Activated T-helper 1 cell treated with anti-CD3 and anti-CD28 coated beads, Interleukin-12 subunit alpha, Interleukin-12 subunit beta, Interleukin-2, Interleukin-4 antibody, amounts not matched to agents 30 ng/mL and 10 ng/mL and 1 ng/mL, durations not matched to agents 14 hours and 24 hours and 36 hours (primary cell): ENCODE measurements at regions of chr2 and their contacts with region 1.

Region 1: GRCh38 chr2:121722479-121722878 is 14.2 kb downstream of the NIFK start:
- DNase-seq: no peak
- H3K4me3 Mint-ChIP-seq: no peak overlapping the region
- H3K27ac Mint-ChIP-seq: peak overlapping the region; percentile 84
- H3K4me1 Mint-ChIP-seq: peaks cover 15% of the 10 kb centered on the region
- H3K27me3 Mint-ChIP-seq: no peaks in the 10 kb centered on the region

Region 2: DNA sequence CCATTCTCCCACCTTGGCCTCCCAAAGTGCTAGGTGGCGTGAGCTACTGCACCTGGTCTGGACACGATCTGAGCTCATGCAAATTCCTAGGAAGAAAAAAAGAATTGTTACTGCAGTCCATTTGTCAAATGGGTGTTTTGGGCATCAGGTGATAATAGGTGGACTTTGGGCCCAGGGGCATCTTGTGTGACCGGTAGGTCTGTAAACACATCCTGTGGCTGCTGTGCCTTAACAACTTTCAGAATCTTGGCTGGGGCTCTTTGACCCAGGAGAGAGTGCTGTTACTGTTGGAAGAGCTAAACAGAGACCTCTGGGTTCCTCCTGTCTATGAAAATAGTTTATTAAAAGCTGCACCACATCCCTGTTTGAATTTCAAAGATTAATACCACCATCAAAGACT is 402.5 kb before region 1 on chr2:
- intact Hi-C with region 1: no loop called
- DNase-seq: no peak
- H3K4me3 Mint-ChIP-seq: no peak overlapping the region
- H3K27ac Mint-ChIP-seq: no peak overlapping the region
- H3K4me1 Mint-ChIP-seq: no peaks in the 10 kb centered on the region
- H3K27me3 Mint-ChIP-seq: peaks cover 1% of the 10 kb centered on the region

Region 3: DNA sequence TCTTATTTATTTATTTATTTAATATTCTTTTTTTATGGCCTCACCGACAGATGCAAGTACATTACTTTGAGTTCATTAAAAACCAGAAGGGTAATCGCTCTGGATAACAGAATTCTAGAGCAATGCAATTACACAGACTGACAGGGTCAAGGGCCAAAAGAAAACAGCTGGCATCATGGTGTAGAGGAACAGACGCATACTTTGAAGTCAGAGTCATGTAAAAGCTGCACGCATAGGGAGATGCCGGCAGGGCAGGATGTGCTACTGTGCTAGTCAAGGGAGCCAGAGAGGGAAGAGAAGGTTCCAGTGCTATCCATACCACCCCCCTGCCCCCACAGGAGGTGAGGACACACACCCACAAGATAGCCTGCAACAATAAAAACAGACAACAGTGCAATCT is 322.3 kb before region 1 on chr2:
- intact Hi-C with region 1: loop called (anchors 1 kb)
- DNase-seq: no peak
- H3K4me3 Mint-ChIP-seq: no peak overlapping the region
- H3K27ac Mint-ChIP-seq: no peak overlapping the region
- H3K4me1 Mint-ChIP-seq: peaks cover 4% of the 10 kb centered on the region
- H3K27me3 Mint-ChIP-seq: no peaks in the 10 kb centered on the region

Region 4: GRCh38 chr2:121596221-121597080 is 126.0 kb before region 1 on chr2:
- intact Hi-C with region 1: loop called (anchors 1 kb)
- DNase-seq: no peak
- H3K4me3 Mint-ChIP-seq: peak overlapping the region; percentile 60
- H3K27ac Mint-ChIP-seq: peak overlapping the region; percentile 61
- H3K4me1 Mint-ChIP-seq: peaks cover 58% of the 10 kb centered on the region
- H3K27me3 Mint-ChIP-seq: no peaks in the 10 kb centered on the region

Region 5: DNA sequence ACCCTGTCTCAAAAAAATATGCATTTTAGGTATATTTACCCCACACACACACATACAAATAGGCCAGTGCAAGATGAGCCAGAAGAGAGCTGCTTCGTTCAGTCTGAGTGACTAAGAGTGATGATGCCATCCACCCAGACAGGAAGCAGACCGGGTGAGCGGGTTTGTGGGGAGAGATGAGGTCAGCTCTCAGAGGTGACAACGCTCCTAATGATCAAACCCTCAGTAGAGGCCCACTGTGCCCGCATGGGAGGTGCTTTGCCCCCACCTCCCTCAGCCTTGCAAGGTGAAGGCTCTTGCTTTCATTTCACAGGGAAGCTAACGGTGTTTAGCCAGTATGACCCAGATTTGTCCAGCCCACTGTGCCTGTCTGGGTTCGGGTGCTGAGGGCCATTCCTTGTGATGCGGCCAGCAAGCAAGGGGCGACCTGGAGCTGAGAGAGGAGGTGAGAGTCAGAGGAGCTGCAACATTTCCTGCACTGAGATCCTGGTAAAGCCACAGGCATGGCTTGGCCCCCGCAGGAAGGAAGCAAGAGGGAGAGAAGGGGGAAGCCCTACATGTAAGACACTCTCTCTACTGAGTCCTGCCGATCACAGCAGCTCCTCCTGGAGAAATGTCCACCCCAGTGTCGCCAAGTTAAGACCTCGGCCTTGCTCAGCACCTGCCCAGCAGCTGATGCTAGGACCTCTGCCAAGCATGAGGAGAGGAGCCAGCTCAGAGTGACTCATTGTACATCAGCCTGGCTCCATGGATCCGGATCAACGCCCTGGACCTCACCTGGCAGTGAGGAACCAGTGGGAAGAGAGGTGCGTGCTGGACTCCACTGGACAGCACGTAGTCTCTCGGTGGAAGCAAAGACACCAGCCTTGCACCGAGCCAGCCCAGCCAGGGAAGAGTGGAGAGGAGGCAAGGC is 22.8 kb before region 1 on chr2:
- intact Hi-C with region 1: loop called (anchors 1 kb)
- DNase-seq: peak; percentile 83
- H3K4me3 Mint-ChIP-seq: peak overlapping the region; percentile 85
- H3K27ac Mint-ChIP-seq: peak overlapping the region; percentile 95
- H3K4me1 Mint-ChIP-seq: peaks cover 48% of the 10 kb centered on the region
- H3K27me3 Mint-ChIP-seq: peaks cover 2% of the 10 kb centered on the region

Region 6: GRCh38 chr2:121839584-121839983 is 117.1 kb after region 1 on chr2:
- intact Hi-C with region 1: no loop called
- DNase-seq: no peak
- H3K4me3 Mint-ChIP-seq: no peak overlapping the region
- H3K27ac Mint-ChIP-seq: no peak overlapping the region
- H3K4me1 Mint-ChIP-seq: no peaks in the 10 kb centered on the region
- H3K27me3 Mint-ChIP-seq: peaks cover 3% of the 10 kb centered on the region